GM12878 (cell line): ENCODE measurements at regions of chr13 and their contacts with region 1.

Region 1: GRCh38 chr13:32310134-32310706 is 4.9 kb downstream of the ZAR1L start:
- DNase-seq: no peak
- ATAC-seq: peak; percentile 84
- H3K4me3 ChIP-seq: no peak overlapping the region
- H3K27ac ChIP-seq: no peak overlapping the region
- H3K4me1 ChIP-seq: peaks cover 8% of the 10 kb centered on the region
- H3K27me3 ChIP-seq: no peaks in the 10 kb centered on the region
- CTCF ChIP-seq: peak; percentile 61 to 73 (median 67)
- EP300 ChIP-seq: no peak
- POLR2A ChIP-seq: no peak
- RAD21 ChIP-seq: peak; percentile 66

Region 2: GRCh38 chr13:32019612-32020233 is 290.5 kb before region 1 on chr13:
- CTCF ChIA-PET with region 1: interaction called, 4 read pairs
- POLR2A ChIA-PET with region 1: no interaction called
- RAD21 ChIA-PET with region 1: no interaction called
- SMC1A ChIA-PET with region 1: no interaction called
- in situ Hi-C with region 1: no loop called
- intact Hi-C with region 1: loop called (anchors 2 kb)
- DNase-seq: peak; percentile 17
- ATAC-seq: peak; percentile 93
- H3K4me3 ChIP-seq: no peak overlapping the region
- H3K27ac ChIP-seq: no peak overlapping the region
- H3K4me1 ChIP-seq: no peaks in the 10 kb centered on the region; the same call in 1 of the 2 replicates
- H3K27me3 ChIP-seq: no peaks in the 10 kb centered on the region
- CTCF ChIP-seq: peak; percentile 63 to 77 (median 76)
- EP300 ChIP-seq: no peak
- POLR2A ChIP-seq: no peak
- RAD21 ChIP-seq: peak; percentile 89

Region 3: DNA sequence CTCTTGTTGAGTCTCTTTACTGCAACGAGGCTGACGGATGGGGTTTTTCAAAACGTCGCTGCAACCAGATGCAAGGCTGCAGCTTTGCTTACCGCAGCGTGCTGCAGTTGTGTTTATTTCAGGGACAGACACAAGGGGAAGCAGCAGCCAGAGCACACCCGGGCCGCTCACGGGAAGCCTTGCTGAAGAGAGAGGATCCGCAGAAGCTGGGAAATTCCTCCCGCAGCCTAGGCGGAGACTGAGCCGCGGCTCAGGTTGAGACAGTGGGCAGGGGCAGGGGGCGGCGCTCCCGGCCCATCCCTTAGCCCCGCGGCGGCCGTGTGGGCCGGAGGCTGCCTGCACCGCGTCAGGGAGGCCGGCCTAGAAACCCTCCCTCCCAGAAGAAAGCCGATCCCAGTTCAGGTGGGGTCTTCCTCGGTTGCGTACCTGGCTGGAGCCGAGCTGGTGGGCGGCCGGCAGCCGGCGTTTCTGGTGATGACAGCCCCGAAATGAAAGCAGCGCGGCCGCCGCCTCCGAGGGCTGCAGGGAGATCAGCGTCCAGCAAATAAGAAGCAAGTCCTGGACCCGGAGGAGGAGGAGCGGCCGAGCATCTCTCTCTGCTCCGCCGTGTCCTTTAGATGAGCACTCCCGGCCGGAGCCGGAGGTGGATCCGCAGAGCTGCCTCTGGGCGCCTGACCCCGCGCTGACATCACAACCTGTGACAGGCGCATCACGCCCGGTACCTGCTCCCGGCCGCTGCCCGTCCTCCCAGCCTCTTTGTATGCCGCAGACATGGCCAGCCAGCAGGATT is 279.0 kb before region 1 on chr13 and contains the start of gene FRY:
- CTCF ChIA-PET with region 1: no interaction called
- POLR2A ChIA-PET with region 1: interaction called, 5 read pairs
- RAD21 ChIA-PET with region 1: no interaction called
- SMC1A ChIA-PET with region 1: no interaction called
- in situ Hi-C with region 1: loop called (anchors 5 kb)
- intact Hi-C with region 1: no loop called
- DNase-seq: no peak
- ATAC-seq: peak; percentile 88
- H3K4me3 ChIP-seq: peak within 1 kb of the TSS; percentile 72
- H3K27ac ChIP-seq: no peak within 1 kb of the TSS
- H3K4me1 ChIP-seq: no peaks in the 10 kb centered on the region
- H3K27me3 ChIP-seq: no peaks in the 10 kb centered on the region
- CTCF ChIP-seq: peak in 1 of 3 experiments; percentile 14; a peak in 2 of 6 replicates
- EP300 ChIP-seq: 0 out of 4 replicates have a peak, but pooled peaks of 1 of the 2 experiments have one; percentile 8
- POLR2A ChIP-seq: no peak
- RAD21 ChIP-seq: peak; percentile 8; the same call in 1 of the 2 replicates
- polyA plus RNA-seq, gene FRY: 0.18 to 0.31 TPM

Region 4: GRCh38 chr13:32246468-32246867 is 63.8 kb before region 1 on chr13:
- CTCF ChIA-PET with region 1: interaction called, 11 read pairs
- POLR2A ChIA-PET with region 1: no interaction called
- RAD21 ChIA-PET with region 1: interaction called, 3 read pairs
- SMC1A ChIA-PET with region 1: no interaction called
- in situ Hi-C with region 1: no loop called
- intact Hi-C with region 1: loop called (anchors 1 kb)
- DNase-seq: no peak
- ATAC-seq: peak; percentile 98
- H3K4me3 ChIP-seq: no peak overlapping the region
- H3K27ac ChIP-seq: no peak overlapping the region
- H3K4me1 ChIP-seq: peaks cover 9% of the 10 kb centered on the region
- H3K27me3 ChIP-seq: no peaks in the 10 kb centered on the region
- CTCF ChIP-seq: peak; percentile 68 to 81 (median 73)
- EP300 ChIP-seq: no peak
- POLR2A ChIP-seq: no peak
- RAD21 ChIP-seq: peak; percentile 55

Region 5: DNA sequence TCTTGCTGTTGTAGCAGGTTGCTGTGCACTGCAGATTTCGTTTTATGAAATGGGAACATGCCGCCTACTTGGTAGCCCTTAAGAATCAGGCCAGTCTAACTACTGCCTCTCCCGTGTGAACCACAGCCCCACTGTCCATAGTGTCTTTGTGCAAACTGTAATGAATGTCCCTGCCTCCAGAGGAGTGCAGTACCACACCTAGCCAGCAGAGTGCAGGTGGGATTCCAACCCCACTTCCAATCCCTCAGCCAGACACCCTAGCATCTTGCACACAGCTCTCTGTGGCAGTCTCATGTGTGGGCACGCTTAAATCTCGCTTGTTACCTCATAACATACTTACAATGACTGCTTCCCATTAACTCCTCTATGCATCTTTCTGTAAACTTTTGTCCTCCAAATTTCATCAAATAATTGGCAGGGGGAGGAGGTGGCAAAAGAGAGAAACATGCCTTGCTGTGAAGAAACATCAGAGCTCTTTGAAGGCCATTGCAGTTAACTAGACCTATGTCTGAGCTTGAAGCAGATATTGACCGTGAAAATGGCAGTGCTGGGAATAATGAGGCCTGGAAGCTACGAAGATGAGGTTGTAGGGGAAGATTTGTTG is 42.3 kb before region 1 on chr13:
- CTCF ChIA-PET with region 1: interaction called, 10 read pairs
- POLR2A ChIA-PET with region 1: no interaction called
- RAD21 ChIA-PET with region 1: interaction called, 3 read pairs
- SMC1A ChIA-PET with region 1: interaction called, 4 read pairs
- in situ Hi-C with region 1: no loop called
- intact Hi-C with region 1: loop called (anchors 1 kb)
- DNase-seq: no peak
- ATAC-seq: peak; percentile 100
- H3K4me3 ChIP-seq: no peak overlapping the region
- H3K27ac ChIP-seq: no peak overlapping the region
- H3K4me1 ChIP-seq: no peaks in the 10 kb centered on the region
- H3K27me3 ChIP-seq: no peaks in the 10 kb centered on the region
- CTCF ChIP-seq: peak; percentile 81 to 95 (median 92)
- EP300 ChIP-seq: no peak
- POLR2A ChIP-seq: no peak
- RAD21 ChIP-seq: peak; percentile 58